Activated CD4-positive, alpha-beta memory T cell treated with anti-CD3 and anti-CD28 coated beads, Interleukin-2, amount 10 ng/mL, durations not matched to agents 7 days and 5 days (primary cell): ENCODE measurements at regions of chr1 and their contacts with region 1.

Region 1: GRCh38 chr1:23098463-23099170 is 70.0 kb downstream of the LUZP1 start:
- DNase-seq: peak; percentile 66
- H3K4me3 Mint-ChIP-seq: no peak overlapping the region
- H3K27ac Mint-ChIP-seq: no peak overlapping the region
- H3K4me1 Mint-ChIP-seq: peaks cover 50% of the 10 kb centered on the region
- H3K27me3 Mint-ChIP-seq: no peaks in the 10 kb centered on the region

Region 2: DNA sequence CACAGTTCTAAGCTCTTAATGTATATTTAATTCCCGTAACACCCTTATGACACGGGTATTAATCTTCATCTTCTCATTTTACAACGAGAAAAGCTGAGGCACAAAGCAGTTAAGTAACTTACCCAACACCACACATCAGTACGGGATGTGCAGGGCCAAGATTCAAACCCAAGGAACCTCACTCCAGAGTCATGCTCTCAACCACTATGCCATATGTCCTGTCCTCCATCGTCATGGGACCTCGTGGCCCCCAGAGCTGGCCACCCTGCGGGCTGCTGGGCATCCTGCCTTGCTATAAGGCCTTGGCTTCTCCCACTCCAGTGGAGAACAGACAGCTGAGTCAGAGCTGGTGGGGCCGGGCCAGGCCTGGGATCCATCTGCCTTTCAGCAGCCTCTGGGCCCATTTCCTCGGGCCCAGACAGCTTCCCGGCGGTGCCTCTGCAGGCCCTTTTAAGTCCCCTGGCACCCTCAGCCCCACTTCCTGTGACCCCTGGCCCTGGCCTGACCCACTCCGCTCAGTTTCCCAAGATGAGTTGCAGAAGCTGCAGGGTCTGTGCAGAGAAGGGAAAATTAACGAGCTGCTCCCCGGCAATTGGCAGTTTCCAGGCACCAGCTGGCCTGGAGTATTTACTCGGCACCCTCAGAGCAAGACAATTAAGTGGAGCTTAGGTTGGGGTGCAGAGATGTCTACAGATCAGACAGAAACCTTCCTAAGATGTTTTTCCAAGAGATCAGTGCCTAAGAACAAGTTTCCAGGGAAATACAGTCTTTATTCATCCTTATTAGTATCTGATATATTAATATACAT is 289.7 kb before region 1 on chr1:
- CTCF ChIA-PET with region 1: no interaction called
- POLR2A ChIA-PET with region 1: no interaction called
- DNase-seq: no peak
- H3K4me3 Mint-ChIP-seq: no peak overlapping the region
- H3K27ac Mint-ChIP-seq: no peak overlapping the region
- H3K4me1 Mint-ChIP-seq: no peaks in the 10 kb centered on the region
- H3K27me3 Mint-ChIP-seq: no peaks in the 10 kb centered on the region

Region 3: GRCh38 chr1:23108918-23109533 is 10.4 kb after region 1 on chr1:
- CTCF ChIA-PET with region 1: interaction called, 28 read pairs
- POLR2A ChIA-PET with region 1: interaction called, 51 read pairs
- DNase-seq: peak; percentile 29
- H3K4me3 Mint-ChIP-seq: no peak overlapping the region
- H3K27ac Mint-ChIP-seq: no peak overlapping the region
- H3K4me1 Mint-ChIP-seq: peaks cover 63% of the 10 kb centered on the region
- H3K27me3 Mint-ChIP-seq: no peaks in the 10 kb centered on the region

Region 4: DNA sequence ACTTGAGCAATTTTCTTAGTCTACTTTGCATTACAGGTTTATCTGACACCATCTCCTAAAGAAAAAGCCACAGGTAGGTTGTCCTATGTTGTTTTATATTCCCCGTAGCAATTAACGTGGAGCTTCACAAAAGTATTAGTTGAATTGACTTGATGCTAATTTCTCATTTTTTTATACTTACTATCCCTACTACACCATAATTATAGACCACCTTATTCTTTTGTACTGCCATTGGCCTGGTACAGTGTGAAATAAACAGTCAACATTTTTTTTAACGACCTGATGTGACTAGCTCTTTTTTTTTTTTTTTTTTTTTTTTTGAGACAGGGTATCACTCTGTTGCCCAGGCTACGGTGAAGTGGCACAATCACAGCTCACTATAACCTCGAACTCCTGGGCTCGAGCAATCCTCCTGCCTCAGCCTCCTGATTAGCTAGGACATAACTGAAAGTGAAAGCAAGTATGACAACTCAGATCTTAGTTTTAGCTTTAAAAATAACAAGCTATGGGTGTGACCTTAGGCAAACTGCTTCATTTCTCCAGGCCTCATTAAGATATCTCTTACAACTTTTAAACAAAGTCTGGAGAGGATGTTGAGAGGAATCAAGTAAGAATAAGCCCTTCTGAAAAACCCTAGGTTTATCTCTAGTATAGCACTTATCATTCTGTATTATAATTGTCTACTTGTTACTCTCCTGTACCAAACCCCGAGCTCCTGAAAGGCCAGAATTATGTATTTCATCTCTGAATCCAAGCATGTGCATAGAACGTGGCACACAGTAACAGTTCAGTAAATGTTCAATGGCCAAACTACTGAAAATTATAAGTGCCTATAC is 20.6 kb after region 1 on chr1:
- CTCF ChIA-PET with region 1: interaction called, 17 read pairs
- POLR2A ChIA-PET with region 1: interaction called, 29 read pairs
- DNase-seq: peak; percentile 68
- H3K4me3 Mint-ChIP-seq: peak overlapping the region; percentile 63
- H3K27ac Mint-ChIP-seq: peak overlapping the region; percentile 89
- H3K4me1 Mint-ChIP-seq: peaks cover 57% of the 10 kb centered on the region
- H3K27me3 Mint-ChIP-seq: no peaks in the 10 kb centered on the region

Region 5: DNA sequence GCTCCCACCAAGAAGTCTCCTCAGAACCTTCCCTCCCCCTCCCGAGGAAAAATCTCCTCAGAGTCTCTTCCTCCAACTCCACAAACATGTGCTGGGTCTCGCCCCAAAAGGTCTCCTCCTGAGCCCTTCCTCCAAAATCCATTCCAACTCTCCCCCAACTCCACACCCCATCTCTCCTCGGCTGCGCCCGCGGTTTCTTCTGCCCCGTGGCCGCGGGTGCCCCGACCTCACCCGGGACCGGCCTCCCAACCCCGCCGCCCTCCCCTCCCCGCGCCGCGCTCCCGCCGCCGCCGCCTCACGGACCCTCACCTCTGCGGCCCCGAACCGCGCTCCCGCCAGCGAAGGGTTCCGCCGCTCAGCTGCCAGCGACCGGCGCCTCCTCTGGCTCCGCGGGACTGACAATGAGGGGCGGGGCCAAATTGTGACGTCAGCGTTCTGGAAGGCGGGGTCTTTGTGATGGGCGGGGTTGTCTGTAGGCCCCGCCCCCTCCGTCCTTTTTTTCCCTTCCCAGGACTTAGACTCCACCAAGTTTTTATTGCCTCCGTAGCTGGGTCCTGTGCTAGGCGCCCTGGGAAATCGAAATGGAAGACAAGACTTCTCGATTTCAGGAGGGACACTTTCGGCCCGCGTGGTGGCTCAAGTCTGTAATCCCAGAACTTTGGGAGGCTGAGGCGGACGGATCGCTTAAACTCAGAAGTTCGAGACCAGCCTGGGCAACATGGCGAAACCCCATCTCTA is 70.0 kb after region 1 on chr1 and contains the start of gene LUZP1:
- CTCF ChIA-PET with region 1: interaction called, 17 read pairs
- POLR2A ChIA-PET with region 1: interaction called, 26 read pairs
- DNase-seq: peak; percentile 88
- H3K4me3 Mint-ChIP-seq: peak within 1 kb of the TSS; percentile 91
- H3K27ac Mint-ChIP-seq: peak within 1 kb of the TSS; percentile 74
- H3K4me1 Mint-ChIP-seq: peaks cover 28% of the 10 kb centered on the region
- H3K27me3 Mint-ChIP-seq: peaks cover 2% of the 10 kb centered on the region
- total RNA-seq, gene LUZP1: 19.4 to 21.8 TPM

Region 6: GRCh38 chr1:23177438-23178380 is 79.1 kb after region 1 on chr1:
- CTCF ChIA-PET with region 1: interaction called, 393 read pairs
- POLR2A ChIA-PET with region 1: interaction called, 39 read pairs
- DNase-seq: peak; percentile 59
- H3K4me3 Mint-ChIP-seq: peak overlapping the region; percentile 54
- H3K27ac Mint-ChIP-seq: no peak overlapping the region
- H3K4me1 Mint-ChIP-seq: peaks cover 21% of the 10 kb centered on the region
- H3K27me3 Mint-ChIP-seq: peaks cover 31% of the 10 kb centered on the region